GM12878 (cell line): ENCODE measurements at regions of chr7 and their contacts with region 1.

Region 1: DNA sequence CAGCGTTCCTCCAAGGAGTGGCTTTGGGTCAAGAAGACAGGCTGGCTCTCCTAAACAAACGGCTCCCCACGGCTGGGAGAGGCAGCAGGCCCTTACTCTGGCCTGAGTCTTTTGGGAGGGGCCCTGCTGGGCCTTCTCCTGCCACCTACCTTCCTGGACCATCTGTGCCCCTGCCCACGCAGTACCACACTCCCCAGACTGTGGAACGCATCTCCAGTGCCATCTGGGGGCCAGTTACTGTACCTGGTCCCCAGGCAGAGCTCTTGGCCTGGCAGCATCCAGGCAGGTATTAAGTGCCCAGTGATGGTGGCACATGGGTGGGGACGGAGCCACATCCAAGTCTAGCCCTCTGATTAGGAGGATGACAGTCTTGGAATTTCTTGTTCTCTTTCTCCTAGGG is 14.4 kb downstream of the ALKBH4 start:
- DNase-seq: no peak
- ATAC-seq: peak; percentile 91
- H3K4me3 ChIP-seq: no peak overlapping the region
- H3K27ac ChIP-seq: no peak overlapping the region
- H3K4me1 ChIP-seq: peaks cover 10% of the 10 kb centered on the region
- H3K27me3 ChIP-seq: no peaks in the 10 kb centered on the region
- CTCF ChIP-seq: peak; percentile 59 to 76 (median 66)
- EP300 ChIP-seq: no peak
- POLR2A ChIP-seq: peak; percentile 72
- RAD21 ChIP-seq: peak; percentile 80

Region 2: GRCh38 chr7:102286237-102287110 is 163.8 kb before region 1 on chr7 and contains the start of gene SH2B2:
- CTCF ChIA-PET with region 1: interaction called, 4 read pairs
- POLR2A ChIA-PET with region 1: no interaction called
- RAD21 ChIA-PET with region 1: no interaction called
- SMC1A ChIA-PET with region 1: no interaction called
- in situ Hi-C with region 1: loop called (anchors 5 kb)
- intact Hi-C with region 1: no loop called
- DNase-seq: no peak
- ATAC-seq: peak; percentile 30
- H3K4me3 ChIP-seq: peak within 1 kb of the TSS; percentile 80
- H3K27ac ChIP-seq: peak within 1 kb of the TSS; percentile 70
- H3K4me1 ChIP-seq: peaks cover 51% of the 10 kb centered on the region
- H3K27me3 ChIP-seq: no peaks in the 10 kb centered on the region
- CTCF ChIP-seq: no peak
- EP300 ChIP-seq: no peak
- POLR2A ChIP-seq: peak; percentile 67
- RAD21 ChIP-seq: no peak
- polyA plus RNA-seq, gene SH2B2: 0.13 TPM in 1 of 2 experiments, not detected in the other

Region 3: DNA sequence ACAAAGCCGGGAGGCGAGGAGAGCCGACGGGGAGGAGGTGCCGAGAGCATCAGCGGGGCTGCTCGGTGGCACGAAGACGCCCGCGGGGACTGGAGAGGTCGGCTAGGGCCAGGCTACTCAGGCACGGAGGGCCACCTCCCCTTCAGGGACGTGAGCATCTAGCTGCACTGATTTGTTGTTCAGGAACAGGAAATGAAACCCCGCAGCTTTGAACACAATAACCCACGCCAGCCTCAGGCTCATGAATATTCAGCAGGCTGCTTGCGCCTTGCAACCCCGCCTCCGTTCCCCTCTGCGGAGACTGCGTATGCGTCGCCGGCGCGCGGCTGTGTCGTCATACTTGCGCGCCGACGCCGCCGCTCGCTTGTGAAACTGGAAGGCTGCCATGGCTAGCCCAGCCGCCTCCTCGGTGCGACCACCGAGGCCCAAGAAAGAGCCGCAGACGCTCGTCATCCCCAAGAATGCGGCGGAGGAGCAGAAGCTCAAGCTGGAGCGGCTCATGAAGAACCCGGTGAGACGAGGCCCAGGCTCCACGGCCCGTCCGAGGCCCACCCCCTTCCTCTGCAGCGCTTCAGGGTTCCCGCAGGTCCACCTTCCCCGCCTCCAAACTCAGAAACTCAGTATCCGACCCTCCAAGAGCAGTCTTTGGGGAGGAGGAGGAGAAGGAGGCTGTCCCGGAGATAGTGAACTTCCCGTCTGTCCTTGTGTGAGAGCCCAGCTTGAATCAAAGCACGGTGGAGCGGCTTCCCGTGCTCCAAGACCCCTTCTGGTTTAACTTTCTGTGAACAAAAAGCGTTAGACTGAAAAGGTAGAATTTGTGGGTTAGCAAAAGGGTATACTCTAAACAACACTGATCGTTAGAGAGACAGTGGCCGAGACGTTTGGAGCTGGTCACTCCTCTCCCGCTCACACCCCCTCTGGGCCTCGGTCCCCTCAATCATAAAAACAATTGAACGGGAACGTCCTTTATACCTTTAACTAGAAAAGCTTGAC is 53.9 kb before region 1 on chr7 and contains the start of gene PRKRIP1:
- CTCF ChIA-PET with region 1: interaction called, 17 read pairs
- POLR2A ChIA-PET with region 1: interaction called, 3 read pairs
- RAD21 ChIA-PET with region 1: interaction called, 7 read pairs
- SMC1A ChIA-PET with region 1: interaction called, 7 read pairs
- in situ Hi-C with region 1: loop called (anchors 10 kb)
- intact Hi-C with region 1: no loop called
- DNase-seq: peak; percentile 96
- ATAC-seq: peak; percentile 99
- H3K4me3 ChIP-seq: peak within 1 kb of the TSS; percentile 97
- H3K27ac ChIP-seq: peak within 1 kb of the TSS; percentile 88
- H3K4me1 ChIP-seq: peaks cover 10% of the 10 kb centered on the region
- H3K27me3 ChIP-seq: no peaks in the 10 kb centered on the region
- CTCF ChIP-seq: no peak
- EP300 ChIP-seq: peak; percentile 17 to 62; a peak in 1 of 4 replicates
- POLR2A ChIP-seq: peak; percentile 86
- RAD21 ChIP-seq: no peak
- polyA plus RNA-seq, gene PRKRIP1: 17.0 to 18.3 TPM

Region 4: DNA sequence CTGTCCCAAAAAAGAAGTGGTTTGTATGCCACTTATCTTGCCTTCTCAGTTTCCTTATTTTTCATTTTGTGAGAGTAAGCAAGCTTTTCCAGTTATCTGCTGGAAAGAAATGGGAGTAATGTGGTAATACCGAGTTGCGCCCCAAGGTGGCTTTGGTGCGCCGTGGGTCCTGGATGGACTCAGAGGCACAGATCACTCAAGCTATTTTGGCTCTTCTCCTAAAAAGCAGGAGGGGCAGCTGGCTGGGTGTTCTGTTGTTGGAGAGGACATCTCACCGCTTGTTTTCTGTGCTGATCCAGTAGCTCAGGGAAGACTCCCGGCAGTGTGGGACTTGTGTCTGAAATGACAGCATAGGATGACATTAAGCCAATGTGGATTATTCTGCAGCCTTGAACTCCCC is 37.7 kb before region 1 on chr7:
- CTCF ChIA-PET with region 1: interaction called, 101 read pairs
- POLR2A ChIA-PET with region 1: interaction called, 14 read pairs
- RAD21 ChIA-PET with region 1: interaction called, 13 read pairs
- SMC1A ChIA-PET with region 1: interaction called, 76 read pairs
- in situ Hi-C with region 1: loop called (anchors 10 kb)
- intact Hi-C with region 1: loop called (anchors 1 kb)
- DNase-seq: no peak
- ATAC-seq: no peak
- H3K4me3 ChIP-seq: no peak overlapping the region
- H3K27ac ChIP-seq: no peak overlapping the region
- H3K4me1 ChIP-seq: peaks cover 36% of the 10 kb centered on the region
- H3K27me3 ChIP-seq: no peaks in the 10 kb centered on the region
- CTCF ChIP-seq: peak; percentile 46 to 48 (median 47); a peak in 5 of 6 replicates
- EP300 ChIP-seq: no peak
- POLR2A ChIP-seq: no peak
- RAD21 ChIP-seq: peak; percentile 72

Region 5: DNA sequence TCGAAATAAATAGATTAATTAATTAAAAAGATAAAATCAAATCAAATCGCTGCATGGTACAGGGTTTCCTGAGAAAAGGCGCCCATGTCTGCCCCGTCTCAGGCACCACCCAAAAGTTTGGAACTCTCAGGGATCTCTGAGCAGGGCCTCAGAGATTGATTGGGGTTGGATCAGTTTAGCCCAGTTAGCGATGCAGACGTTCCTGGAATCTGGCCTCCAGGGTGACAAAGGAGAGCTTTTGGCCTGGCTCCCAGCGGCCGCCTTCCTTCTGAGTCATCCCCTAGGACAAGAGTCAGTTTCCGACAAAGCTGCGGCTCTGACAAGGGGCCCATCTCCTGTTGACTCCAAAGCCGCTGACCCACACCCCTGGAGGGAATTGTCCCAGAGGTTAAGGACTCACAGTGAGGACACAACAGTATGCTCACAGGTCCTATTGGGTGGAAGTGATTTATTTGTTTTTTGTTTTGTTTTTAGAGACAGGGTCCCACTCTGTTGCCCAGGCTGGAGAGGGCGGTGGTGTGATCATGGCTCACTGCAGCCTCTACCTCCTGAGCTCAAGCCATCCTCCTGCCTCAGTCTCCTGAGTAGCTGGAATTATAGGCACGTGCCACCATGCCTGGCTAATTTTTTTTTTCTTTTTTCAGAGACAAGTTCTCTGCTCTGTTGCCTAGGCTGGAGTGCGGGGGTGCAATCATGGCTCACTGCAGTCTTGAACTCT is 10.0 kb before region 1 on chr7:
- CTCF ChIA-PET with region 1: interaction called, 14 read pairs
- POLR2A ChIA-PET with region 1: interaction called, 210 read pairs
- RAD21 ChIA-PET with region 1: interaction called, 4 read pairs
- SMC1A ChIA-PET with region 1: interaction called, 15 read pairs
- in situ Hi-C with region 1: no loop called
- intact Hi-C with region 1: no loop called
- DNase-seq: no peak
- ATAC-seq: no peak
- H3K4me3 ChIP-seq: no peak overlapping the region
- H3K27ac ChIP-seq: peak overlapping the region; percentile 99; the same call in 1 of the 2 replicates
- H3K4me1 ChIP-seq: peaks cover 44% of the 10 kb centered on the region
- H3K27me3 ChIP-seq: no peaks in the 10 kb centered on the region
- CTCF ChIP-seq: no peak
- EP300 ChIP-seq: no peak
- POLR2A ChIP-seq: no peak
- RAD21 ChIP-seq: no peak

Region 6: DNA sequence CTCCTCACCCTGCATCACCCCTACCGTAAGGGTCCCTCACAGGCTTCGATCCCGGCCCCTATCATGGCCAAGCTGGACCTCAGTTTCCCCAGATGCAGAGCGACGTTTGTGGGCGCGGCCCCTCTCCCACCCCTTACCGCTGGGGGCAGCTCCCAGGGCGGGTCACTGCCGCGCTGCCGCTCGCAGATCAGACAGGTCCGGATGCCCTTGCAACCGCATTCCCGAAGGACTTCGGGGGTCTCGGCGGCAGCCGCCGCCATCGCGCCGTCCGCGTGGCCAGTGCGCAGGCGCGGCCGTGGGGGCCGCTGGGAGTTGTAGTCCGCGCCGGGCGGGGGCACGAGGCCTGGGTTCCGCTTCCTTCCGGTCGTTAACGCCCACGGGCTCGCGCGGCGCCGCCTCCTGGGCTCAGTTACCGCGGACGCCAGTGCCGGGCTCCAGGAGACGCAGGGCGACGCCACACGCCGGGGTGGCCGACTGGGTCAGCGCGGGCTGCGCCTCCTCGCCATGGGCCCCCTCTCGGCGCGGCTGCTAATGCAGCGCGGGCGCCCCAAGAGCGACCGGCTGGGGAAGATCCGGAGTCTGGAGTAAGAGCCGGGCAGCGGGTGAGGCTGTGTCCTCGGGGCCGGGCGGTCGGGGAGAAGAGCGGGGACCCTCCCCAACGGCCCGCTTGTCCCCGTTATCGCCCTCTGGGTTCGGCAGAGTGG is 14.5 kb after region 1 on chr7 and contains the starts of genes ALKBH4 and LRWD1:
- CTCF ChIA-PET with region 1: interaction called, 18 read pairs
- POLR2A ChIA-PET with region 1: interaction called, 6 read pairs
- RAD21 ChIA-PET with region 1: interaction called, 3 read pairs
- SMC1A ChIA-PET with region 1: interaction called, 7 read pairs
- in situ Hi-C with region 1: no loop called
- intact Hi-C with region 1: no loop called
- DNase-seq: no peak
- ATAC-seq: peak; percentile 94
- H3K4me3 ChIP-seq: peak within 1 kb of the TSS; percentile 93
- H3K27ac ChIP-seq: peak within 1 kb of the TSS; percentile 89
- H3K4me1 ChIP-seq: peaks cover 15% of the 10 kb centered on the region
- H3K27me3 ChIP-seq: no peaks in the 10 kb centered on the region
- CTCF ChIP-seq: peak in 2 of 3 experiments; percentile 12 to 38; a peak in 4 of 6 replicates
- EP300 ChIP-seq: peak in 1 of 2 experiments; percentile 11; a peak in 1 of 4 replicates
- POLR2A ChIP-seq: peak; percentile 95
- RAD21 ChIP-seq: 0 out of 2 replicates have a peak, but pooled peaks have one; percentile 11
- polyA plus RNA-seq, gene ALKBH4: 4.1 to 9.1 TPM
- polyA plus RNA-seq, gene LRWD1: 0.40 to 2.0 TPM